B cell (primary cell): ENCODE measurements at regions of chr3 and their contacts with region 1.

Region 1: GRCh38 chr3:39288300-39288808 is 8.5 kb upstream of the CX3CR1 start:
- DNase-seq: peak; percentile 94
- ATAC-seq: peak; percentile 99
- H3K4me3 ChIP-seq: no peak overlapping the region
- H3K4me3 Mint-ChIP-seq: no peak overlapping the region
- H3K27ac ChIP-seq: no peak overlapping the region
- H3K27ac Mint-ChIP-seq: peak overlapping the region; percentile 67
- H3K4me1 ChIP-seq: peaks cover 13 to 27% of the 10 kb centered on the region in 2 donors
- H3K4me1 Mint-ChIP-seq: peaks cover 39% of the 10 kb centered on the region
- H3K27me3 ChIP-seq: no peaks in the 10 kb centered on the region
- H3K27me3 Mint-ChIP-seq: no peaks in the 10 kb centered on the region
- CTCF ChIP-seq: peak; percentile 96

Region 2: GRCh38 chr3:39065197-39065596 is 223.2 kb before region 1 on chr3:
- CTCF ChIA-PET with region 1: interaction called, 10 read pairs
- POLR2A ChIA-PET with region 1: no interaction called
- intact Hi-C with region 1: no loop called
- DNase-seq: peak; percentile 73
- ATAC-seq: peak; percentile 99
- H3K4me3 ChIP-seq: no peak overlapping the region
- H3K4me3 Mint-ChIP-seq: no peak overlapping the region
- H3K27ac ChIP-seq: peak overlapping the region in 1 of 2 donors; percentile 79
- H3K27ac Mint-ChIP-seq: peak overlapping the region; percentile 37
- H3K4me1 ChIP-seq: peaks cover 7 to 11% of the 10 kb centered on the region in 2 donors
- H3K4me1 Mint-ChIP-seq: peaks cover 22% of the 10 kb centered on the region
- H3K27me3 ChIP-seq: no peaks in the 10 kb centered on the region
- H3K27me3 Mint-ChIP-seq: no peaks in the 10 kb centered on the region
- CTCF ChIP-seq: peak; percentile 69

Region 3: GRCh38 chr3:39126532-39127071 is 161.8 kb before region 1 on chr3:
- CTCF ChIA-PET with region 1: interaction called, 49 read pairs
- POLR2A ChIA-PET with region 1: no interaction called
- intact Hi-C with region 1: no loop called
- DNase-seq: peak; percentile 50
- ATAC-seq: peak; percentile 37
- H3K4me3 ChIP-seq: no peak overlapping the region
- H3K4me3 Mint-ChIP-seq: peak overlapping the region; percentile 11
- H3K27ac ChIP-seq: no peak overlapping the region
- H3K27ac Mint-ChIP-seq: peak overlapping the region; percentile 62
- H3K4me1 ChIP-seq: peaks cover 47 to 50% of the 10 kb centered on the region in 2 donors
- H3K4me1 Mint-ChIP-seq: peaks cover 62% of the 10 kb centered on the region
- H3K27me3 ChIP-seq: no peaks in the 10 kb centered on the region
- H3K27me3 Mint-ChIP-seq: no peaks in the 10 kb centered on the region
- CTCF ChIP-seq: no peak

Region 4: DNA sequence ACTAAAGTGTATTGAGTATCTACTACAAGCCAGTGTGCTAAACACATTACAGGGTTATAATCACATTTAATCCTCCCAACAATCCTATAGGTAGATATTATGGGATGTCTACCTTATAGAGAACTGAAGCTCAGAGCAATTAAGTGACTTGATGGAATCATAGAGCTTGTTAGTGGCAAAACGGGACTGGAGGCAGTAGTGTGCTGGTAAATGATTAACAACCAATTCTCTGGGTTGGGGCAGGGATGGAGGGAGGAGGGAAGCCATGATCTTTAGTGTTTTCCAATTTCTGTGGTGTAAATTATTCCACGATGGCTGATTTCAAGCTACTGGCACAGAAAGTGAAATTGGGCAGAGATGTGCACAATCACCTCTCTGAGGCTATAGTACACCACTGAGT is 116.5 kb before region 1 on chr3:
- CTCF ChIA-PET with region 1: interaction called, 22 read pairs
- POLR2A ChIA-PET with region 1: no interaction called
- intact Hi-C with region 1: no loop called
- DNase-seq: no peak
- ATAC-seq: no peak
- H3K4me3 ChIP-seq: no peak overlapping the region
- H3K4me3 Mint-ChIP-seq: no peak overlapping the region
- H3K27ac ChIP-seq: no peak overlapping the region
- H3K27ac Mint-ChIP-seq: no peak overlapping the region
- H3K4me1 ChIP-seq: no peaks in the 10 kb centered on the region
- H3K4me1 Mint-ChIP-seq: no peaks in the 10 kb centered on the region
- H3K27me3 ChIP-seq: no peaks in the 10 kb centered on the region
- H3K27me3 Mint-ChIP-seq: no peaks in the 10 kb centered on the region
- CTCF ChIP-seq: no peak

Region 5: GRCh38 chr3:39216176-39216790 is 72.1 kb before region 1 on chr3:
- CTCF ChIA-PET with region 1: interaction called, 1,573 read pairs
- POLR2A ChIA-PET with region 1: interaction called, 3 read pairs
- intact Hi-C with region 1: loop called (anchors 2 kb)
- DNase-seq: peak; percentile 78
- ATAC-seq: peak; percentile 90
- H3K4me3 ChIP-seq: no peak overlapping the region
- H3K4me3 Mint-ChIP-seq: peak overlapping the region; percentile 50
- H3K27ac ChIP-seq: no peak overlapping the region
- H3K27ac Mint-ChIP-seq: peak overlapping the region; percentile 29
- H3K4me1 ChIP-seq: peaks cover 24 to 32% of the 10 kb centered on the region in 2 donors
- H3K4me1 Mint-ChIP-seq: peaks cover 31% of the 10 kb centered on the region
- H3K27me3 ChIP-seq: peaks cover 0 to 9% (median 0%) of the 10 kb centered on the region in 4 experiments
- H3K27me3 Mint-ChIP-seq: peaks cover 3% of the 10 kb centered on the region
- CTCF ChIP-seq: no peak

Region 6: DNA sequence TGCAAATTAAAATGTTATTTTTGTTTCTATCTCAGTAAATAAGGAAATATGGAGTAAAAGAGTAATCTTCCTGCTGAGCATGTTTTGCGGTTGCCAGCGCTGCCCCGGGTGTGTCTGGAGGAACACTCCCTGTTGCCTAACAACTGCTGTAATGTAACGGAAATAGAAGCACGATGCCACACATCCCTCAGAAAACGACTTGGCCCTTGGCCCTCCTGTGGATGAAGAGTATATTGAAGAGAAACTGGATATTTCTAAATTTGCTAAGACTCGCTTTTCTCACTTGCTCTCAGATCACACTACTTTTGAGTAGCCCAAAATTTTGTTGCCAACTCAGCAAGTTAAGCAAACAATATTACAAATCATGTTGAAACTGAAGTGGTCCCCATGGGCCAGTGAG is 27.4 kb before region 1 on chr3:
- CTCF ChIA-PET with region 1: interaction called, 90 read pairs
- POLR2A ChIA-PET with region 1: interaction called, 7 read pairs
- intact Hi-C with region 1: no loop called
- DNase-seq: peak; percentile 71
- ATAC-seq: peak; percentile 60
- H3K4me3 ChIP-seq: no peak overlapping the region
- H3K4me3 Mint-ChIP-seq: peak overlapping the region; percentile 10
- H3K27ac ChIP-seq: no peak overlapping the region
- H3K27ac Mint-ChIP-seq: peak overlapping the region; percentile 62
- H3K4me1 ChIP-seq: peaks cover 59 to 60% of the 10 kb centered on the region in 2 donors
- H3K4me1 Mint-ChIP-seq: peaks cover 64% of the 10 kb centered on the region
- H3K27me3 ChIP-seq: peaks cover 0 to 3% (median 0%) of the 10 kb centered on the region in 4 experiments
- H3K27me3 Mint-ChIP-seq: peaks cover 4% of the 10 kb centered on the region
- CTCF ChIP-seq: peak; percentile 54

Region 7: GRCh38 chr3:39383045-39383880 is 94.9 kb after region 1 on chr3 and contains the start of gene SLC25A38:
- CTCF ChIA-PET with region 1: interaction called, 17 read pairs
- POLR2A ChIA-PET with region 1: no interaction called
- intact Hi-C with region 1: loop called (anchors 2 kb)
- DNase-seq: peak; percentile 93
- ATAC-seq: peak; percentile 71
- H3K4me3 ChIP-seq: peak within 1 kb of the TSS; percentile 4 to 91 (median 83)
- H3K4me3 Mint-ChIP-seq: peak within 1 kb of the TSS; percentile 98
- H3K27ac ChIP-seq: peak within 1 kb of the TSS; percentile 94 to 96
- H3K27ac Mint-ChIP-seq: peak within 1 kb of the TSS; percentile 99
- H3K4me1 ChIP-seq: peaks cover 43 to 50% of the 10 kb centered on the region in 2 donors
- H3K4me1 Mint-ChIP-seq: peaks cover 42% of the 10 kb centered on the region
- H3K27me3 ChIP-seq: no peaks in the 10 kb centered on the region
- H3K27me3 Mint-ChIP-seq: no peaks in the 10 kb centered on the region
- CTCF ChIP-seq: peak; percentile 60
- total RNA-seq, gene SLC25A38: 46.3 and 53.0 TPM in 2 replicates

Region 8: DNA sequence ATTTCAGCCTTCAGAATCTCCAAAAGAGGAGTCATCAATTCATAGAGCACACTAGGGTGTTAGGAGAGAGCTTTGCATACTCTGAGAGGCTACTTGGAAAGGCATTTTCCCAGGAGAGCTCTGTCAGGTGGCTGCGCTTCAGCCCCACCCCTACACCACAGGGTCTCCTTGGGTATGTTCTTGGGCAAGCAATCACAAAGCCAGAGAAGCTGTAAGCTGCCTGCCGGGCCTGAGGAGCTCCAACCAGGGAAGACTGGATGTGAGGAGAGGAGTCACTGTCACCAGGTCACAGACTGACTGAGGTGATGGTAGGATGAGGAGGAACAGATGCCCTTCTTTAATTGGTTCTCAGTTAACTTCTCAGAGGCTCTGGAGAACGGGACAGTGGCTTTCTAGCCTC is 108.3 kb after region 1 on chr3:
- CTCF ChIA-PET with region 1: no interaction called
- POLR2A ChIA-PET with region 1: no interaction called
- intact Hi-C with region 1: no loop called
- DNase-seq: no peak
- ATAC-seq: no peak
- H3K4me3 ChIP-seq: no peak overlapping the region
- H3K4me3 Mint-ChIP-seq: no peak overlapping the region
- H3K27ac ChIP-seq: no peak overlapping the region
- H3K27ac Mint-ChIP-seq: no peak overlapping the region
- H3K4me1 ChIP-seq: no peaks in the 10 kb centered on the region
- H3K4me1 Mint-ChIP-seq: peaks cover 2% of the 10 kb centered on the region
- H3K27me3 ChIP-seq: no peaks in the 10 kb centered on the region
- H3K27me3 Mint-ChIP-seq: no peaks in the 10 kb centered on the region
- CTCF ChIP-seq: no peak